ENCODE measurements at regions of chr19 and their contacts with region 1.

Region 1: GRCh38 chr19:45770192-45771101 is 1.4 kb upstream of the SIX5 start:
- DNase-seq: peak; percentile 95

Region 2: GRCh38 chr19:45591004-45591637 is 179.3 kb before region 1 on chr19:
- intact Hi-C with region 1: no loop called
- DNase-seq: no peak

Region 3: DNA sequence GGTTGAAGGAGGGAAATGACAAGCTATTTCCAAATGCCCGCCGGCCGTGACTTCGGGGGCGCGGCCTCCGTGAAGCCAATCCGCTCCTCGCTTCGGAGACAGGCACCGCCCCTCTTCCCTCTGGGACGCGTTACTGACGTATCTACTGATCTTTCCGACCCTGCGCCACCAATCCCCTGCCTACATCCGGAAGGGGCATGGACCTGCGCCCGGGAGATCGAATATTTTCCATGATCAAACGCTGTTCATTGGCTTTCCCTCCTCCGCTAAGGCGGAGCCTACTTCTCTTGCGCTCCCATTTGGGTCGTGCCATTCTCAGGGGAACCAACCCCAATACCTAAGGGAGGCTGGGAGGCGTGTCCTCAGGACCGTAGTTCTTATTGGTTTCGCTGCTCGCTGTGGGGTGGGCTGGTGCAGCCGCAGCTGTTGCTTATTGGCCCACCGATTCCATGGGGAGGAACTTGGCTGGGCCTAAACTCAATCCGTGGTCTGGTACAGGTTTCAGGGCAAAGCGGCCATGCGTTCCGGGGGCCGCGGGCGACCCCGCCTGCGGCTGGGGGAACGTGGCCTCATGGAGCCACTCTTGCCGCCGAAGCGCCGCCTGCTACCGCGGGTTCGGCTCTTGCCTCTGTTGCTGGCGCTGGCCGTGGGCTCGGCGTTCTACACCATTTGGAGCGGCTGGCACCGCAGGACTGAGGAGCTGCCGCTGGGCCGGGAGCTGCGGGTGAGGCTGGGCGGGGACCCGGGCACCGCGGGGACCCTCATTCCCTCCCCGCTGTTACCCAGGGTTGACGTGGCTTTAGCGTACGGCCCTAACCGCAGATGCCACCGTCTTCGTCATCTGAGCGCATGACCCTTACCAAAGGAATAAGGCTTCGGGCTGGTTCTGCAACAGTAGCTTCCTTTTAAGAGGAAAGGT is 78.0 kb before region 1 on chr19 and contains the start of gene QPCTL:
- intact Hi-C with region 1: loop called (anchors 2 kb)
- DNase-seq: peak; percentile 97
- total RNA-seq, gene QPCTL: 2.6 TPM

Region 4: DNA sequence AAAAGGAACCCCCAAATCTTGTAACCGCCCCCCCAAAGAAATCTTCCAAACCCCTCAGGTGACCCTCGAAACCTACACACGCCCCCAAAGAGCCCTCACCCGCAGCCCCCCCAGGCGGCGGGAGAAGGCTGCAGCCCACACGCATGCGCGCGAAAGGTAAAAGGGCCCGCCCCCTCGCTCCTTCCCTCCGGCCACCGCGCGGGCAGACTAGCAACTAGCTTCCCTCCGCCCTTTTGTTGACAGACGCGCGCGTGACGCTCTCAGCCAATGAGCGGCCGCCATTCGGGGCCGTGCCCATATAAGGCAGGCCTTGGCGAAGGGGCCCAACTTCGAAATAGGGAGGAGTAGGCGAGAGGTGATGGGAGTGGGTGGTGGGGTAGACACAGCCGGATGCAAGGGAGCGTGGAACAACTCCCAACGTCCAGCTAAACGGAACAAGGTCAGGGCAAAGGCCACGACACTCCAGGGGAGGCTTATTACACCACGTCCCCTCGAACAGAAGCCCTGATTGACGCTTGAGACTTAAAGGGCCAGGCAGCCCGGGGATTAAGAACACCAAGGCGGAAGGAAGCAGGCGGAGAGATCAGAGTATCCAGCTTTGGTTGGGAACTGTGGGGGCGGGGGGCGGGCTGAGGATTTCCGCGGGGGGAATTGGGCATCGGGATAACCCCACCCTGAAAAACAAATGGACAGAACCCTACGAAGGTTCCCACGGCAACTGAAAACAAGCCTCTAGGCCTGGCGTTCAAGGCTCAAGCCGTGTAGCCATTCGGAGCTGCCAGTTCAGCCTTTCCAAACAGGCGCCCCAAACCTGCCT is 53.1 kb before region 1 on chr19:
- intact Hi-C with region 1: loop called (anchors 2 kb)
- DNase-seq: peak; percentile 100

Region 5: DNA sequence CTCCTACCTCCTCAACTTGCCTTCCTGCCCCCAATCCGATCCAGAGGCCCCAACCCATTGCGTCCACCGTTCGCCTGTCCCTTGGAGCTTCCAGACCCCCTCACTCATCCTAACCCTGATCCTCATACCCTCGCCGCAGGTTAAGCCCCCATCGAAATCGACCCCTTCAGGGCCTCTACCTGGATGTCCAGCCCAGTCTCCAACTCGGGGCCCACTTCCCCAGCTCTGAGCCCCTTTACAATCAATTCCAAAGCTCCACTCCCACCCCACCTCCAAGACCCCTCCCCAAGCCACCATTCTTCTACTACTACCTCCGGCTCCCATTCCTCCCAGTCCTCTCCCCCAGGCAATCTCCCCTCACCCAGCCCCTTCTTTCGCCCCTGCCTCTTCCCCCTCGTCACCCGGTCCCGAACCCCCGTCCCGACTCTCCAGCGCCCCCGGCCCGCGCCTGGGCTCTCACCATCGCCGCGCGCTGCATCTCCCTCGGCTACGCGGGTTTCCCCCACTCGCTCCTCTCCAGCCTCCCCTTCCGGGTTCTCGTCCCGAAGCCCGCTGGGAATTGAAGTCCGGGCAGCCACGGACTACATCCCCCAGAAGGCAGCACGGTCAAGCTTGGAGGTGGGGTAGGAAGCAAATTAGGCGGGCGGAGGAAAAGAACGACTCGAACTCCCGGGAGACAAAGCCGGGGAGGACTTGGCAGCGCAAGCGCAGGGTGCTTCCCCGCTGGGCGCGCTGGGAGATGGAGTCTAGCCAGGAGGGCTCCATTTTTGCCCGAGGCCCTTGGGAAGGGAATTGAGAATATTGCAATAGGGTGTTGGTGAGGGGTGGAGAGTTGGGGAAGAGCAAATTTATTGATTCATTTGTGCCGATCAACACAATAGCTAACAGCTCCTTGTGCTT is 39.8 kb before region 1 on chr19 and contains the start of gene FBXO46:
- intact Hi-C with region 1: loop called (anchors 2 kb)
- DNase-seq: peak; percentile 98
- total RNA-seq, gene FBXO46: 8.2 TPM

Region 6: GRCh38 chr19:45782820-45783785 is 12.7 kb after region 1 on chr19:
- intact Hi-C with region 1: loop called (anchors 2 kb)
- DNase-seq: peak; percentile 91

Region 7: DNA sequence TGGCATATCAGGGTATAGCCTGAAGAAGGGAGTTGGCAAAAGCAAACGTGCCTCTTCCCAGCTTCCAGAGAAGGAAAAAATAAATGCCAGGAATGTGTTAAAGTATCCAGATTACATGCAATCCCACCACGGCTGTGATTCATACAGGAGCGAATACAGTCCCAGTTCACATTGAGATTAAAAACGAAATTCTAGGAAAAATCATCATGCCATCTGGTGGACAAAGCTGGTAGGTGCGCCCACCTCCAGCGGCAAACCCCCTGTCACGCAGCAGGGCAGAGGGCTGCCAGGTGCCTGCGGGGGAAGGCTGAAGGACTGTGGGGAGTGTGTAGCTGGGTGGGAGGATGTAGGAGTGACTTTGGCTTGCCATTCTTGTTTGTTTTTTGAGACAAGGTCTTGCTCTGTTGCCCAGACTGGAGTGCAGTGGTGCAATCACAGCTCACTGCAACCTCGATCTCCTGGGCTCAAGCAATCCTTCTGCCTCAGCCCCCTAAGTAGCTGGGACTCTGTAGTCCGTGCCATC is 28.6 kb after region 1 on chr19:
- intact Hi-C with region 1: loop called (anchors 1 kb)
- DNase-seq: no peak

Region 8: GRCh38 chr19:45817010-45817724 is 46.7 kb after region 1 on chr19:
- intact Hi-C with region 1: loop called (anchors 1 kb)
- DNase-seq: peak; percentile 96

Region 9: GRCh38 chr19:45852145-45852750 is 81.8 kb after region 1 on chr19:
- intact Hi-C with region 1: no loop called
- DNase-seq: no peak

Region 10: GRCh38 chr19:45972081-45972946 is 201.9 kb after region 1 on chr19:
- intact Hi-C with region 1: no loop called
- DNase-seq: no peak

Region 11: DNA sequence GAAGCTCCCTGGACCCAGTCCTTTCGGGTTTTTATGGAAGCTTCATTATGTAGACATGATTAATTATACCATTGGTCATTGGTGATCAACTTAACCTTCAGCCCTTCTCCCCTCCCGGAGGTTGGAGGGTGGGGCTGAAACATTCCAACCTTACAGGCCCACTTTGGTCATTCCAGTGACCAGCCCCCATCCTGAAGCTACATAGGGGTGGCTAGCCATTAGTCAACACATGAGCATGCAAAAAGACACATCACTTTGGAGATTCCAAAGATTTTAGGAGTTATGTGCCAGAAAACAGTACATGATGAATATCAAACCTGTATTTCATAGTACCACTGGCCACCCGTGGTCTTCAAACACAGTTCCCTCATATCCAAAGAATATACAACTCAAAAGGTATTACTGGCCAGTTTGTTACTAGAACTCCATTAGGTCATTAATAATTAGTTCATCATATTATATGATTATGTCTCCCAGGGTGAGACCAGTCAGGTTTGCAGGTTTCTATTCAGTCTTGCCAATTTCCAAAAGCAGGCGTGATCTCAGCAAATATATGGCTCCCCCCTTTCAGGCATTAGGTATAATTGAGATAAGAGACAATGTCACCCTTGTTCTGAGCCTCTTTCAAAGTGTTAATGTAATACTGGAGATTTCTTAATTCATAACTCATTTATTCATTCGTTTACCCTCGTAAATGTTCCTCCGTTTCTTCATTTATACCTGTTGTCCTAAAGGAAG is 587.6 kb after region 1 on chr19:
- intact Hi-C with region 1: no loop called
- DNase-seq: peak; percentile 17